AG04449 (cell line): ENCODE measurements at regions of chr20 and their contacts with region 1.

Region 1: DNA sequence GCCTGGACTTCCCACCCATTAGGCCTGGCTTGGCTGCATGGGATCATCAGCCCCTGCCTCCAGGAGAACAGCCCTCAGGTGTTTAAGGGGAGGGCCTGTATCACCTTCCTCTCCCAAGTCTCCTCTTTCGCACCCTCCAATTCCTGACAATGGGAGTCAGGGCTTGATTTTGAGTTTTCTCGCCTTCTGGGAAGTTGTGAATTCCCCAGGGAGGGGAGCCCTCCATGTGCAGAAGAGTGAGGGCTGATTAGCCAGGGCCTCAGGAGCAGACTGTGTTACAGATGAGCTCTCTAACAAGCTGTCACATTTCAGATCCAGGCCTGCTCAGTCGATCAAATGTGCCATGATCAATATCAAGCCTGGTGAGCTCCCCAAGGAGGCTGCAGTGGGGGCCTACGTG is 42.4 kb downstream of the CNBD2 start:
- DNase-seq: no peak
- H3K4me3 ChIP-seq: no peak overlapping the region
- CTCF ChIP-seq: no peak

Region 2: DNA sequence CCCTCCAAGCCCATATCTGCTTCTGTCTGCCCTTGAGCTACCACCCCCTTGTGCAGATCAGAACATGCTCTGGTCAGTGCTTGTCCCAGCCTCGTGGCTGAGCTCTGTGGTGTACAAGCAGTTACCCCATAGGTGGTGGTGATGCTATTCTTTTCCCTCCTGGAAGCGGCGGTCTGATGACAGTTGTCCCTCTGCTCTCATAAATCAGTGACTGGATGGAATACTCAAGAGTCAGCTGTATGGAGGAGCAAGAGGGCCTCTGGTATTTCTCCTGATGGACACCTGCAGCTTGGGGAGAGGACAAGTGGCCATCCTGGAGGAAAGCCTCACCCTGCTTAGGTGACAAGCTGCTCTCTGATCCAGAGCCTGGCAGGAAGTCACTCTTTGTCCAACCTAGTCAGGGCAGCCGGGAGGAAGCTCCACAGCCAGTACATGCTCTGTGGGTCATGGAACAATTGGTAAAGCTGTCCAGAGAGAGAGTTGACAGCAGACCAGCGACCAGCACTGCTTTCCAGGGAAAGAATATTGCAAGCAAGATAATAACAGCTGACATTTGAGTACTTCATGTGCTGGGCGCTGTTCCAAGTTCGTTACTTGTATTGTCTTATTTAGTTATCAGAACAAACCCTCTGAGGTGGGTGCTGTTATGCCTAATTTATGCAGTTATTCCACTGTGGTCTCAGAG is 103.7 kb before region 1 on chr20:
- CTCF ChIA-PET with region 1: no interaction called
- POLR2A ChIA-PET with region 1: no interaction called
- DNase-seq: no peak
- H3K4me3 ChIP-seq: no peak overlapping the region
- CTCF ChIP-seq: no peak

Region 3: GRCh38 chr20:36145877-36146707 is 135.3 kb after region 1 on chr20:
- CTCF ChIA-PET with region 1: interaction called, 52 read pairs
- POLR2A ChIA-PET with region 1: no interaction called
- DNase-seq: no peak
- H3K4me3 ChIP-seq: no peak overlapping the region
- CTCF ChIP-seq: no peak